ENCODE measurements at regions of chr16 and their contacts with region 1.

Region 1: GRCh38 chr16:62060089-62060488 is 23.9 kb upstream of the CDH8 start:
- DNase-seq: no peak
- ATAC-seq: no peak
- H3K4me3 ChIP-seq: no peak overlapping the region
- H3K27ac ChIP-seq: no peak overlapping the region
- H3K4me1 ChIP-seq: no peaks in the 10 kb centered on the region
- H3K27me3 ChIP-seq: no peaks in the 10 kb centered on the region
- CTCF ChIP-seq: no peak

Region 2: GRCh38 chr16:62021161-62021581 is 38.9 kb before region 1 on chr16:
- intact Hi-C with region 1: loop called in 1 of 10 experiments (anchors 2 kb)
- DNase-seq: no peak
- ATAC-seq: no peak
- H3K4me3 ChIP-seq: no peak overlapping the region
- H3K27ac ChIP-seq: no peak overlapping the region
- H3K4me1 ChIP-seq: no peaks in the 10 kb centered on the region
- H3K27me3 ChIP-seq: no peaks in the 10 kb centered on the region
- CTCF ChIP-seq: no peak